ENCODE measurements at regions of chr1 and their contacts with region 1.

Region 1: DNA sequence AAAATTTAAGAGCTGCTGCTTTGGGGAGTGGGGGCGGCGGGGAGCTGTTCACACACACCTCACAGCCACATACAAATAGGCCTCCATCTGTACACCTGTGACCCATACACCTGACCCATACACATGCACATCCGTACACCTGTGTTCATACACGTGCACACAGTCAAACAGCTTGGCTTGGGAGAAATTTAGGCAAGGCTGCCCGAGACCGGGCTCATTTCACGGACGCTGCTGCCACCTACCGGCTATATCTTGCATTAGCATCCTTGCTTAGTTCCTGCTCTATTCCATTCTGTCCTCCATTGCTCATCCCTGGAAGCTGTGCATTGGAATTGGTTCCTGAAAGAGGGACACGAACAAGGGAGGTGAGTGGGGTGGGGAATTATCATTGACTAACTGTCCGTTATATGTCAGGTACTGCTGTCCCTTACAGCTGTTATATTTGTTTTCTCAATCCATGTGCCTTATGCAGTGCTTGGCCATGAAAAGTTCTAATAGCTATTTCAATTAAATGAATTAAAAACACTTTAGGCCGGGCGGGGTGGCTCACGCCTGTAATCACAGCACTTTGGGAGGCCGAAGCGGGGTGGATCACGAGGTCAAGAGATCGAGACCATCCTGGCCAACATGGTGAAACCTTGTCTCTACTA is 37.1 kb upstream of the EPB41 start:
- DNase-seq: peak; percentile 87 to 94
- H3K4me3 ChIP-seq: peak overlapping the region in 2 of 4 donors; percentile 6 to 25
- H3K27ac ChIP-seq: no peak overlapping the region
- H3K4me1 ChIP-seq: peaks cover 0 to 21% (median 14%) of the 10 kb centered on the region in 4 donors
- H3K27me3 ChIP-seq: peaks cover 0 to 13% (median 0%) of the 10 kb centered on the region in 3 donors
- CTCF ChIP-seq: peak in 5 of 7 experiments; percentile 87 to 95 (median 91)
- EP300 ChIP-seq: no peak
- POLR2A ChIP-seq: no peak

Region 2: DNA sequence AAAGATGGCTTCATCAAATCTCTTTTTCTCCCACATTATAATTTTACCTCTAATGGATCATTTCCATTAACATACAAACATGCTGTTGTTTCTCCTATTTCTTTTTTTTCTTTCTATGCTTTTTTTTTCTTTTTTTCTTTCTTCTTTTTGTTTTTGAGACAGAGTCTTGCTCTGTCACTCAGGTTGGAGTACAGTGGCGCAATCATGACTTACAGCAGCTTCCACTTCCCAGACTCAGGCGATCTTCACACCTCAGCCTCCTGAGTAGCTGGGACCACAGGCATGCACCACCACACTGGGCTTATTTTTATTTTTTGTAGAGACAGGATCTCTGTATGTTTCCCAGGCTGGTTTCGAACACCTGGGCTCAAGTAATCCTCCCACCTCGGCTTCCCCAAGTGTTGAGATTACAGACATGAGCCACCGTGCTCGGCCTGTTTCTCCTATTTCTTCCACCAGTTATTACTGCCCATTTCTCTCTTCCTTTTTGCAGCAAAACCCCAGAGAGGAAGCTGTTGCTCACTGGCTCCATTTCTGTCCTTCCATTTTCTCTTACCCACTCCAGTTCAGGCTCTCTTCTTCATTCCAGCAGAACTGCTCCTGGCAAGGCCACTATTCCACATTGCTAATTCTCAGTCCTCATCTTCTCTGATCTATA is 97.4 kb before region 1 on chr1:
- intact Hi-C with region 1: loop called (anchors 5 kb)
- DNase-seq: no peak
- H3K4me3 ChIP-seq: no peak overlapping the region
- H3K27ac ChIP-seq: no peak overlapping the region
- H3K4me1 ChIP-seq: peaks cover 2 to 18% (median 9%) of the 10 kb centered on the region in 4 donors
- H3K27me3 ChIP-seq: no peaks in the 10 kb centered on the region
- CTCF ChIP-seq: no peak
- EP300 ChIP-seq: no peak
- POLR2A ChIP-seq: no peak

Region 3: DNA sequence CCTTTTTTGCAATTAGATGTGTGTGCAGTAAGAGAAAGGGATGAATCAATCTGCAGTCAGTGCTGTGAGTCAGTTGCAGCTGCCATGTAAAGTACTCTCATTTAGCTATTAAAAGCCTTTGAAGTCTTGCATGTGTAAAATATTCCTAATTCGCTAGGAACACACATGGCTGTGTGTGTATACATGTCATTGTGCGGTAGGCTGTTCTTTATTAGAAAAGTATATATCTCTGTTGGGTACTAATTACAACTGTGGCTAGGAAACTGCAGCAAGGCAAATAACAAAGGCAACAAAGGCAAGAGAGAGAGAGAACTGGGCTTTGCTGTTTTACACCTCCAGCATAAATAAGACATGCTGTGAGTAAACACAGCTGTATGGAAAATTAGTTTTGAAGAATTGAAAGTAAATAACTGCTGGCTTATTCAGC is 78.8 kb after region 1 on chr1:
- intact Hi-C with region 1: no loop called
- DNase-seq: peak in 1 of 2 donors; percentile 13
- H3K4me3 ChIP-seq: no peak overlapping the region
- H3K27ac ChIP-seq: no peak overlapping the region
- H3K4me1 ChIP-seq: peaks cover 0 to 9% (median 2%) of the 10 kb centered on the region in 4 donors
- H3K27me3 ChIP-seq: no peaks in the 10 kb centered on the region
- CTCF ChIP-seq: no peak
- EP300 ChIP-seq: no peak
- POLR2A ChIP-seq: no peak

Region 4: DNA sequence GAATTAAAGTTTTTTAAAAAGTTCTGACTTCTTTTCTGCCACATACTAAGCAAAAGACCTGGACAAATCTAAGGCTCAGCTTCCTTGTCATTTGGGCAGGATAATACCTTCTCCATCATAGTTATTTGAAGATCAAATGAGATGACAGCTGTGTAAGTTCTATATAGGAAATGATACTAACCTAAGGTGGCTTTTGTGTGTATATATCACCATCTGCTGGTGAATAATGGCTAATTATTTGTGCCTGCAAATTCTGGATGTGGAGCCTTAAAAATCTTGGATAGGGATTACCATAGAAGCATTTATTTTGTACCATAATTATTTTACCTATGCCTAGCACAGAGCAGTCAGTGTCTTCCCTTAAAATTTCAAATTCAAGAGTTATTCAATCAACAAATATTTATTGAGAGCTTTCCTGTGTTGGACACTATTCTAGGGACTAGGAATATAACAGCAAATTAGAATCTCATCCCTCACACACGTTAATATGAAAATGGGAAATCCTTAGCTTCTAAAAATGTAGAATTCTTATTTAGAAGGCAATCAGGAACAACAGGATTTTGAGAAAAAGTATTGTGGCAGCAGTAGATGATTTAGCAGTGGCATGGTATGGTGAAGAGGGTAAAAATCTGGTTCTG is 156.7 kb after region 1 on chr1:
- intact Hi-C with region 1: loop called (anchors 5 kb)
- DNase-seq: peak in 1 of 2 donors; percentile 69
- H3K4me3 ChIP-seq: no peak overlapping the region
- H3K27ac ChIP-seq: no peak overlapping the region
- H3K4me1 ChIP-seq: no peaks in the 10 kb centered on the region
- H3K27me3 ChIP-seq: no peaks in the 10 kb centered on the region
- CTCF ChIP-seq: peak in 5 of 7 experiments; percentile 33 to 83 (median 73)
- EP300 ChIP-seq: no peak
- POLR2A ChIP-seq: no peak